RWPE1 (cell line): ENCODE measurements at regions of chr20 and their contacts with region 1.

Region 1: DNA sequence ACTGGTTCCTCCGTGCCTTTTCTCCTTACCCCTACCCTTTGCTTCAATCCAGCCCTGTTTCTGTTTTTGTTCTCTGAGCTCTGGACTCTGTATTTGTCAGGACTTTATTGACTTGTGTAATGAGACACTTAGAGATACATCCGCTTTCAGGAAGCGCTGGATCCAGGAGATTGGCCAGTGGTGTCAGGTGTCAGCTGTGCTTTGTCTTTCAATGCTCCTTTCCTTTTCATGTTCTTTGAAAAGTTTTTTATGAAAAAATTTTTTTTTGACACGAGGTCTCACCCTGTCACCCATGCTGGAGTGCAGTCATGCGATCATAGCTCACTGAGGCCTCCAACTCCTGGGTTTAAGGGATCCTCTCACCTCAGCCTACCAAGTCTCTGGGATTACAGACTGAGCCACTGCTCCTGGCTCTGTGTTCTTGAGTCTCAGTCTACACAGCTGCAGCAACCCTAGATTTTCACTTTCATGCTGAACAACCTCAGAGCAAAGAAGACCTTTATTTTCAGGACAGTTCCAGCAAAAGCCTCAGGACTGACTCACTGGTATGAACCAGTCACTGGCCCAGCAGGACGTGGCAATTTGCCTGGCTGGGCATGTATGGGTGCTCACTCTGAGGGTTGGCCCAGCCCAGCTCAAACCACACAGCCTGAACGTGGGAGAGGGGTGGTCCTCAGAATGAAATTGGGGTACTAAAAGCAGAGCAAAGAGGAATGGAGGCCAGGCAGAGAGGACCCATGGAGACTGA is 108.5 kb downstream of the DHX35 start:
- DNase-seq: peak; percentile 84
- H3K27ac ChIP-seq: no peak overlapping the region
- CTCF ChIP-seq: no peak

Region 2: GRCh38 chr20:39016041-39016440 is 54.6 kb before region 1 on chr20:
- CTCF ChIA-PET with region 1: interaction called, 10 read pairs
- POLR2A ChIA-PET with region 1: no interaction called
- DNase-seq: no peak
- H3K27ac ChIP-seq: no peak overlapping the region
- CTCF ChIP-seq: no peak

Region 3: DNA sequence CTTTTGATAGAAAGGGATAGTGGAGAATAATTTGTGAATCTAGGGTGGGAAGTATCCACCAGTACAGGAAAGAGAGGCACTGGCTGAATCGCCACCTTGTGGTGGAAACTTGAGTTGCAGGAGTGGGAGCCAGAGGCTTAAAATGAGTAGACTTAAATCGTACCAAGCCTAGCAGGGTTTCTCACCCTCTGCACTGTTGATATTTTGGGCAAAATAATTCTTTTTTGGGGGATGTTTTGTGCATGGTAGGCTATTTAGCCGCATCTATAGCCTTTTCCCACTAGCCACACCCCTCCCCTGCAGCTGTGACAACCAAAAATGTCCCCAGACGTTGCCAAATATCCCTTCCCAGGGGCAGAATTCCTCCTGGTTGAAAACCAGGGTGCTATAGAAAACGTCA is 10.6 kb after region 1 on chr20:
- CTCF ChIA-PET with region 1: interaction called, 18 read pairs
- POLR2A ChIA-PET with region 1: no interaction called
- DNase-seq: peak; percentile 94
- H3K27ac ChIP-seq: no peak overlapping the region
- CTCF ChIP-seq: peak; percentile 99